Caco-2 (cell line): ENCODE measurements at regions of chr3 and their contacts with region 1.

Region 1: DNA sequence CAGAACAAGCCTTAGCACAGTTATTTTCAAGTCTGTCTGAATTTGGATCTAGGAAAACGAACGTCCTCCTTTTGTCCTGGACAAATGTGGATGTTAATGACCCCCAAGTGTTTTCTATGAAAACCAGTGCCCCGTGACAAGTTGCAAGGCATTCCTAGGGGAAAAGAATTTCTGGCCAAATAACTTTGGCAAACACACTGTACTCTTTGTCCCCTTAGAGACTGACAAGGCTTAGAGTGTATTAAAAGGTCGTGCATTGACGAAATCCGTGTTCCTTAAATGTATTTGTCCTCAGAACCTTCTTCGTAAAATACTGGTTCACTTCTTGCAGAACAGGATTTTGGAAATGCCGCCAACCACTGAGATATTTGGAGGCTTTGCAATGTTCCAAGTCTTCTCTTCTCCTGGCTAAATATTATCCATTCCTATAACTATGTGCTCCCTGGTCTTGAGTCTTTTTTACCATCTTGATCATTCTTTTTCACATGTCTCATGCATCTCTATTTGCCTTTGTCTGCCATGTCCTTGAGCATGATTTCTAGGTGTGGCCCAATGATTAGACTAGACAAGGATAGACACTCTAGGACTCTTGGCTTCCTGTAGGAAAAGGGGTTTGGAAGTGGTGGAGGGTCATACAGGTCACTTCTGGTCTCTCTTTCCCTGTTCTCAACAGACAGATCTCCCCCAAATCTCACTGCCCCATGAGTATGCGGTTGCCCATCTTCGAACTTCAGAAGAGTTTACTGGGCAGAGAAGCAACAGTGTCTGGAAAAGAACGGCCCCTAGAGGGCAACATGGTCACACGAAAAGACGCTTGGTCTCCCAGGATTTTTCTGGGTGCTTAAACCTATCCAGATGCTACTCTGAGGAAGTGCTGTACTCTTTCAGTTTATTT is 117.5 kb downstream of the EDEM1 start:
- DNase-seq: peak; percentile 55 to 76
- H3K4me3 ChIP-seq: no peak overlapping the region
- H3K4me3 Mint-ChIP-seq: peak overlapping the region; percentile 16
- H3K27ac Mint-ChIP-seq: peak overlapping the region; percentile 58
- H3K4me1 ChIP-seq: peaks cover 27% of the 10 kb centered on the region
- H3K4me1 Mint-ChIP-seq: peaks cover 18% of the 10 kb centered on the region
- H3K27me3 ChIP-seq: no peaks in the 10 kb centered on the region
- H3K27me3 Mint-ChIP-seq: no peaks in the 10 kb centered on the region
- CTCF ChIP-seq: peak; percentile 69 to 81

Region 2: GRCh38 chr3:5330152-5330810 is 25.2 kb after region 1 on chr3:
- CTCF ChIA-PET with region 1: no interaction called
- POLR2A ChIA-PET with region 1: no interaction called
- intact Hi-C with region 1: loop called (anchors 1 kb)
- DNase-seq: no peak
- H3K4me3 ChIP-seq: no peak overlapping the region
- H3K4me3 Mint-ChIP-seq: no peak overlapping the region
- H3K27ac Mint-ChIP-seq: peak overlapping the region; percentile 88
- H3K4me1 ChIP-seq: peaks cover 35% of the 10 kb centered on the region
- H3K4me1 Mint-ChIP-seq: peaks cover 21% of the 10 kb centered on the region
- H3K27me3 ChIP-seq: 0 out of 2 replicates have a peak, but pooled peaks cover 1% of the 10 kb centered on the region
- H3K27me3 Mint-ChIP-seq: no peaks in the 10 kb centered on the region
- CTCF ChIP-seq: no peak

Region 3: DNA sequence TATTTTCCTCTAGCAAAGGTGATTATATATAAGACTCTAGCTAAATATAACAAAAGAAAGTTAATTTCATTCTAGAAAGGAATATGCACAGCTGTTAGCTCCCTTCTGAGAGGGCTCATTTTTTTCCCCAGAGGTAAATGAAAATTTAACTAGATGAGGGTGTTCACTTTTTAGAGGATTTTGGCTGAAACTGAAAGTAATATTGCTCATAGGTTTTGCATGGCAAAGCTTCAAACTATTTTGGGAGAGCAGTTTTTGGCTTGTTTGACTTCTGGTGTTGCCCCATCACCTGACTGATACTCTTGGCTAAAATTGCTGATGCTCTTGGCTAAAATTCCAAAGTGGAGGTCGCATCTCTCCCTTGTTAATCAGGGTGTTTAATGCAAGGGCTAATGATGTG is 194.4 kb after region 1 on chr3:
- CTCF ChIA-PET with region 1: no interaction called
- POLR2A ChIA-PET with region 1: no interaction called
- intact Hi-C with region 1: loop called (anchors 10 kb)
- DNase-seq: no peak
- H3K4me3 ChIP-seq: no peak overlapping the region
- H3K4me3 Mint-ChIP-seq: no peak overlapping the region
- H3K27ac Mint-ChIP-seq: no peak overlapping the region
- H3K4me1 ChIP-seq: no peaks in the 10 kb centered on the region
- H3K4me1 Mint-ChIP-seq: no peaks in the 10 kb centered on the region
- H3K27me3 ChIP-seq: no peaks in the 10 kb centered on the region
- H3K27me3 Mint-ChIP-seq: no peaks in the 10 kb centered on the region
- CTCF ChIP-seq: no peak

Region 4: GRCh38 chr3:5731094-5731493 is 426.1 kb after region 1 on chr3:
- CTCF ChIA-PET with region 1: no interaction called
- POLR2A ChIA-PET with region 1: no interaction called
- intact Hi-C with region 1: loop called (anchors 1 kb)
- DNase-seq: peak in 1 of 2 experiments; percentile 3
- H3K4me3 ChIP-seq: no peak overlapping the region
- H3K4me3 Mint-ChIP-seq: no peak overlapping the region
- H3K27ac Mint-ChIP-seq: no peak overlapping the region
- H3K4me1 ChIP-seq: no peaks in the 10 kb centered on the region
- H3K4me1 Mint-ChIP-seq: no peaks in the 10 kb centered on the region
- H3K27me3 ChIP-seq: no peaks in the 10 kb centered on the region
- H3K27me3 Mint-ChIP-seq: no peaks in the 10 kb centered on the region
- CTCF ChIP-seq: no peak

Region 5: GRCh38 chr3:6088433-6088832 is 783.4 kb after region 1 on chr3:
- CTCF ChIA-PET with region 1: no interaction called
- POLR2A ChIA-PET with region 1: no interaction called
- intact Hi-C with region 1: loop called (anchors 10 kb)
- DNase-seq: no peak
- H3K4me3 ChIP-seq: no peak overlapping the region
- H3K4me3 Mint-ChIP-seq: no peak overlapping the region
- H3K27ac Mint-ChIP-seq: no peak overlapping the region
- H3K4me1 ChIP-seq: no peaks in the 10 kb centered on the region
- H3K4me1 Mint-ChIP-seq: no peaks in the 10 kb centered on the region
- H3K27me3 ChIP-seq: no peaks in the 10 kb centered on the region
- H3K27me3 Mint-ChIP-seq: no peaks in the 10 kb centered on the region
- CTCF ChIP-seq: peak; percentile 13 to 31